Activated CD4-positive, alpha-beta memory T cell treated with anti-CD3 and anti-CD28 coated beads for 36 hours (primary cell): ENCODE measurements at regions of chr14 and their contacts with region 1.

Region 1: DNA sequence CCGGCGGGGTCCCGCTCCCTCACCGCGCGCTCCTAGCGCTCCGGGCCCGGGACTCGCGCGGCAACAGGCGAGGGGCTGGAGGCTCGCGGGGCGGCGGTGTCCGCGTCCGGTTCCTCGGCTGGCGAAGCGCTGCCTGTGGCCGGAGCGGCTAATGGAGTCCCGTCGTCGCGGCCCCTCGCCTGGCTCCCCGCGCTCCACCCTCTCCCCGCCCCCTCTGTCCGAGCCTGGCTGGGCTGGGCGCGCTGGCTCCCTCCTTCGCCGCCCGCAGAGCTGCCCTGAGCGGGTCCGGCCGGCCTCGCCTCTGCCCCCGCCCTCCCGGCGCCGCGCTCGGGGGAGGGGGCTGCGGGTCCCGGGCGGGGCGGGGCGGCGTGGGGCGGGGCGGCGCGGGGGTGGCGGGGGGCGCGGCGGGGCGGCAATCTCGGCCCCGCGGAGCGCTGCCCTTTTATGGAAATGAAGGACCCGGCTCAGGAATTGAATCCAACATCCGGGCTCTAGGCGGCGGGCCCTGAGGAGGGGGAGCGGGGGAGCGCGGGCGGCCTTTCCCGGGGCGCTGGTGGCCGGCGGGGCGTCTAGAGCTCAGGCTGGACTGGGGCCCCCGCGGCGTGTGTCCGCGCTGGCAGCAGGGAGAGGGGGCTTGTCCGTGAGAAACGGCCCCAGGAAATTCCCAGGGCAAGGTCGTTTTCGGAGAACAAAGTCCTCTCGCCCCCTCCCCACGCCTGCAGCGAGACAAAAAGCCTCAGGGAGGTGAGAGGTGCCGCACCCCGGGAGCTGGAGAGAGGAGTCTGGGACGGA is at the start of gene FERMT2:
- DNase-seq: peak; percentile 40
- H3K4me3 Mint-ChIP-seq: peak within 1 kb of the TSS; percentile 83
- H3K27ac Mint-ChIP-seq: peak within 1 kb of the TSS; percentile 9
- H3K4me1 Mint-ChIP-seq: peaks cover 33% of the 10 kb centered on the region
- H3K27me3 Mint-ChIP-seq: peaks cover 43% of the 10 kb centered on the region
- total RNA-seq, gene FERMT2: 3.8 to 5.3 TPM

Region 2: DNA sequence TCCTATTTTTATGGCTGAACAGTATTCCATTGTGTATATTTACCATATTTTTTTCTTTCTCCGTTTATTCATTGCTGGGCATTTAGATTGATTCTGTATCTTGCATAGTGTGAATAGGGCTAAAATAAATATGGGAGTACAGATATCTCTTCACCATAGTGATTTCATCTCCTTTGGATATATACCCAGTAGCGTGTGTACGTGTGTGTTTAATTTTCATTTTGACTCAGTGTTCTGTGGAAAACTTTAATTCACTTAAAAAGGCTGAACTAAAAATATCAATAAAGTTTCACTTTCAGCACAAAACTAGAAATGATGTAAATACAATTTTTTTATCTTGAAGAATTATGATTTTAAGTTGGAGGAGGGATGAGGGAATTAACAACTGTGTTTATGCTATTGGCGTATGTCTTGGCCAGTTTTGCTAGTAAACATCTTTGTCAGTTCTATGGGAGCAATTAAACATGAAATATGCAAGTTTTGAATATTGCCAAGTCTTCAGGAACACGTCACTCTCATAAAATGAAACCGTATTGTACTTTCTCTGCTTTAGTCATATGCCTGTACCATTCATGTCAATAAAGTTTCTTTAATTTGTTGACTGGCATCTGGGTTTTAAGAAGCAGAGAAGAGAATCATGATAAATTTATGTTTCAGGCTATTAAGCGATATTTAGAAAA is 537.2 kb before region 1 on chr14:
- CTCF ChIA-PET with region 1: no interaction called
- POLR2A ChIA-PET with region 1: no interaction called
- intact Hi-C with region 1: loop called (anchors 10 kb)
- DNase-seq: no peak
- H3K4me3 Mint-ChIP-seq: peak overlapping the region; percentile 4
- H3K27ac Mint-ChIP-seq: peak overlapping the region; percentile 69
- H3K4me1 Mint-ChIP-seq: peaks cover 49% of the 10 kb centered on the region
- H3K27me3 Mint-ChIP-seq: no peaks in the 10 kb centered on the region

Region 3: DNA sequence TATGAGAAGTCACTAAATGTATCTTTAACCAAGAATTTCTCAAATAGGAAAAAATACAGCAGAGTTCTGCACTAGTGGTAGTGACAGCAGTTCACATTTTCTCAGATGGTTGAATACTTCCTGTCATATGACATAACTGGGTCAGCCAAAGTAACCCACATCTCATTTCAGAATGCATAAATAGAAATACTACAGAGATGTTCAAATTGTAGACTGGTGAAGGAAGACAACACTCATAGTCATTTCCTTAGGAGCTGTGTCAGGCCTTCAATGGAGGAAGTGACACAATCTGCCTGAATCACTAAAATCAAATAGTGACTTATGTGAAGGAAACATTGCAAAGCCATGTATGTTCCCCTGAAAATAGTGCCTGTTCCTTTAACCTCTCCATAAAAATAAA is 32.6 kb before region 1 on chr14:
- CTCF ChIA-PET with region 1: no interaction called
- POLR2A ChIA-PET with region 1: no interaction called
- intact Hi-C with region 1: loop called (anchors 1 kb)
- DNase-seq: peak; percentile 18
- H3K4me3 Mint-ChIP-seq: no peak overlapping the region
- H3K27ac Mint-ChIP-seq: peak overlapping the region; percentile 35
- H3K4me1 Mint-ChIP-seq: peaks cover 25% of the 10 kb centered on the region
- H3K27me3 Mint-ChIP-seq: no peaks in the 10 kb centered on the region

Region 4: DNA sequence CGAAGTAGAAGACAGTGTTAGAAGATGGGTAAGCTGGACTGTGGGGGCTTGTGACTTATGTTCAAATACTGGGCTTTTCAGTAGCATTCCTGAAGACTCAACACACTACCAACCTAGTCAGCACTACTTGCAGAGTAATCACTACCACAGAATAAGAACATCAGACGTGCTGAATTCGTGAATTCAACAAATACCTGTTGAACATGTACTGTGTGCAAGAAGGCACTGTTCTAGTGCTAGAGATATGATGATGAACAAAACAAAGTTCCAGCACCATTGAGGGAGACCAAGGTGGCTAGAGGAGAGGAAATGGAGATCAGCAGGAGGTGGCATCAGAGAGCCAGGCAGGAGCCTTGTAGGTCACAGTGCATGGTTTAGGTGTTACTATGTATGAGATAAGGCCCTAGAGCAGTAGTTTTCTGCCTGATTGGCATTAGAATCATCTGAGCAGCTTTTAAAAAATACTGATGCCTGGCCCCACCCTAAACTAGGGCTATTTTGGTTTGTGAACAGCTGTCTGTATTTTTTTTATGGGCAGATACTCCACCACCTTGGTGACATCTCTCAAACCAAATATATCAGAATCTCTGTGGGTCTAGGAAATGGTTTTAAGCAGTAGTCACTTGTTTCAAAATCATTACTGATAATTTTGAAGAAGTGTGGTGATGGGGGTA is 27.1 kb before region 1 on chr14:
- CTCF ChIA-PET with region 1: no interaction called
- POLR2A ChIA-PET with region 1: no interaction called
- intact Hi-C with region 1: loop called (anchors 1 kb)
- DNase-seq: peak; percentile 15
- H3K4me3 Mint-ChIP-seq: no peak overlapping the region
- H3K27ac Mint-ChIP-seq: no peak overlapping the region
- H3K4me1 Mint-ChIP-seq: peaks cover 6% of the 10 kb centered on the region
- H3K27me3 Mint-ChIP-seq: peaks cover 2% of the 10 kb centered on the region

Region 5: GRCh38 chr14:53180268-53181221 is 229.5 kb after region 1 on chr14:
- CTCF ChIA-PET with region 1: no interaction called
- POLR2A ChIA-PET with region 1: no interaction called
- intact Hi-C with region 1: loop called (anchors 2 kb)
- DNase-seq: peak; percentile 75
- H3K4me3 Mint-ChIP-seq: peak overlapping the region; percentile 3
- H3K27ac Mint-ChIP-seq: peak overlapping the region; percentile 67
- H3K4me1 Mint-ChIP-seq: peaks cover 41% of the 10 kb centered on the region
- H3K27me3 Mint-ChIP-seq: no peaks in the 10 kb centered on the region

Region 6: DNA sequence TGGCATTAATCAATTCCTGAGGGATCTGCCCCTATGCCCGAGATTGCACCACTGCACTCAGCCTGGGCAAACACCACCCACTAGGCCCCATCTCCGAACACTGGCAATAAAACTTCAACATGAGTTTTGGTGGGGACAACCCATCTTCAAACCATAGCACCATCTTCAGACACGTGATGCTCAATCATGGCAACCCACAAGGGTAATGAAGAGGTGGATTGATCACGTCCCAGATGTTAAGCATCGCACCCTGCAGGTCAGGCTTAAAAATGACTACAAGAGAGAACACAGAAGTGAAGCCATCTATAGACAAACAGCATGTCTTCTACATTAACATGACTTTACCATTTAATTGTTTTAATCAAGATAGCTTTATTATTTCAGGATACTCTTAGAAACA is 244.9 kb after region 1 on chr14:
- CTCF ChIA-PET with region 1: no interaction called
- POLR2A ChIA-PET with region 1: no interaction called
- intact Hi-C with region 1: no loop called
- DNase-seq: no peak
- H3K4me3 Mint-ChIP-seq: no peak overlapping the region
- H3K27ac Mint-ChIP-seq: no peak overlapping the region
- H3K4me1 Mint-ChIP-seq: peaks cover 23% of the 10 kb centered on the region
- H3K27me3 Mint-ChIP-seq: no peaks in the 10 kb centered on the region